ENCODE measurements at regions of chr7 and their contacts with region 1.

Region 1: GRCh38 chr7:135795846-135796570 is 47.4 kb upstream of the FAM180A start:
- DNase-seq: no peak
- H3K4me3 ChIP-seq: no peak overlapping the region
- H3K27ac ChIP-seq: peak overlapping the region in 1 of 2 donors; percentile 28
- H3K4me1 ChIP-seq: peaks cover 4% of the 10 kb centered on the region
- H3K27me3 ChIP-seq: no peaks in the 10 kb centered on the region
- CTCF ChIP-seq: no peak
- POLR2A ChIP-seq: no peak

Region 2: DNA sequence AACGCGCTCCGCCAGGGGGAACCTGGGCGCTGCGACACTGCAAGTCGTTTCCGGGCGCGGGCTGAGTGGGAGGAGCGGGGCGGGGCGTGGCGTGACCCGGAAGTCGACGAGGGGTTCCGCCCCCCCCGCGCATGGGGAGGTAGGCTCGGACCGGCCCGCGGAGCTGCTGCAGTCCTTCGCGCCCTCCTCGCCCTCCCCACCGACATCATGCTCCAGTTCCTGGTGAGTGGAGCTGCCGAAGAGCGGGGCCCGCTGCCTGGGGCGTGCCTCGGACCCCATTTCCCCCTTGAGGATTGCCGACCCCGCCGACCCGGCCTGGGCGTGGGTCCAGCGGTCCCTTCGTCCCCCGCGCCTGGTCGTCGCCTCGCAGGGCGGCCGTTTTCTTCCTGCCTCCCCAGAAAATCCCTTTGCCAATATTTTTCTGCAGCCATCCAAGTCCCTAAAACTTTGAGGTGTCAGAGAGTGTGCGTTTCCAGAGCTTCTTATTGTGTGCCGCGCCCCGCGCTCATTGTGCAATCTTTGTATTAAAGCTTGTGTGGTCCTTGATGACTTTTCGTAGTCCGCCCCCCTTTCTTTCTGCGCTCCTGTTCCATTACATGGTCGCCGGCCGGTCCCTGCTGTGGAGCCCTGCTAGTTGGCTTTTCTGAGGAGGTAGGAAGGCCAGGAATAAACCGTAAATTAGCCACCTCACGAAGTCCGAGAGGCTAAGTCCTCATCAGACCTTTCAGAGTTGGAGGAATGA is 133.5 kb before region 1 on chr7 and contains the start of gene STMP1:
- intact Hi-C with region 1: loop called (anchors 10 kb)
- DNase-seq: peak; percentile 97
- H3K4me3 ChIP-seq: peak within 1 kb of the TSS; percentile 76 to 85
- H3K27ac ChIP-seq: peak within 1 kb of the TSS; percentile 77 to 95
- H3K4me1 ChIP-seq: peaks cover 11% of the 10 kb centered on the region
- H3K27me3 ChIP-seq: no peaks in the 10 kb centered on the region
- CTCF ChIP-seq: peak; percentile 90 to 96 (median 93)
- POLR2A ChIP-seq: peak; percentile 63
- total RNA-seq, gene STMP1: 36.4 to 39.7 TPM

Measured in testis (tissue), 5 donors.